ENCODE measurements at regions of chr5 and their contacts with region 1.

Region 1: GRCh38 chr5:9544502-9545135 is 1.3 kb downstream of the SEMA5A start:
- DNase-seq: peak; percentile 71 to 88 (median 83)
- H3K4me3 ChIP-seq: peak overlapping the region; percentile 60
- H3K27ac ChIP-seq: peak overlapping the region in 1 of 2 donors; percentile 10
- H3K4me1 ChIP-seq: no peaks in the 10 kb centered on the region
- H3K27me3 ChIP-seq: no peaks in the 10 kb centered on the region
- CTCF ChIP-seq: peak; percentile 73 to 81 (median 76)
- EP300 ChIP-seq: no peak
- POLR2A ChIP-seq: no peak

Region 2: DNA sequence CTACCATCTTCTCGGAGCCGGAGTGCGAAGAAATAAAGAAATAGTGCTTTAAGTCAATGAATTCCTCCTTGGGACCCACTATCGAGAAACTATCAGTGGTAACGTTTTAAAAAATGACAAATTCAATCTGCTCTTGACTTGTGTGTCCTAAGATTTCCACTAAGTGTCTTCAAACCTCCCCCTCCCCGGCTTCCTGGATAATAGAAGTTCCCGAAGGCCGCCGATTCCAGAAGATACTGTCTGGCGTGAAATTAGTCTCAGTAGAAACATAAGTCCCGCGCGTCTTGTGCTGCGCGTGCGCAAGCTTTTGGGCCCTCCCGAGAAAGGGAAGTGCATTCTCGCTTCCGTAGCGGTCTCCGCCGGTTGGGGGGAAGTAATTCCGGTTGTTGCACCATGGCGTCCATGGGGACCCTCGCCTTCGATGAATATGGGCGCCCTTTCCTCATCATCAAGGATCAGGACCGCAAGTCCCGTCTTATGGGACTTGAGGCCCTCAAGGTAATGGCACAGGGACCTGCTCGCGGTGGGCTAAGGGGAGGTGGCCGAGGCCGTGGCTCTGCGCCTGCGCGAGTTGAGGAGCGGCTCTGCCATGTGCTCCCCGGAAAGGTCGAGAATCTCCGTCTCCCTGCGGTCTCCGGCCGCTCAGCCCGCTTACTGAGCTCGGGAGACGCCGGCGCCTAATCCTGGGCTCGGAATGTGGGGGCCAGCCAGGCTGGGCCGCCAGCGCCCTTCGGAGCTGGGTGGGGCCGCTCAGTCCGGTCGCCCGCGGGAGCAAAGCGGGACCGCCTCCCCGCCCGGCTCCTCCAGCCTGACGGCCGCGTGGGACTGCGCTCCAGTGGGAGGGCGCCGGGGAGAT is 705.6 kb after region 1 on chr5 and contains the start of gene CCT5:
- intact Hi-C with region 1: loop called in 1 of 4 experiments (anchors 10 kb)
- DNase-seq: peak; percentile 90 to 94 (median 92)
- H3K4me3 ChIP-seq: peak within 1 kb of the TSS; percentile 86
- H3K27ac ChIP-seq: peak within 1 kb of the TSS; percentile 69 to 88
- H3K4me1 ChIP-seq: peaks cover 8% of the 10 kb centered on the region
- H3K27me3 ChIP-seq: no peaks in the 10 kb centered on the region
- CTCF ChIP-seq: no peak
- EP300 ChIP-seq: no peak
- POLR2A ChIP-seq: no peak
- total RNA-seq, gene CCT5: 76.1 to 141 (median 101) TPM